Dorsolateral prefrontal cortex (tissue), 120 donors: ENCODE measurements at regions of chr17 and their contacts with region 1.

Region 1: DNA sequence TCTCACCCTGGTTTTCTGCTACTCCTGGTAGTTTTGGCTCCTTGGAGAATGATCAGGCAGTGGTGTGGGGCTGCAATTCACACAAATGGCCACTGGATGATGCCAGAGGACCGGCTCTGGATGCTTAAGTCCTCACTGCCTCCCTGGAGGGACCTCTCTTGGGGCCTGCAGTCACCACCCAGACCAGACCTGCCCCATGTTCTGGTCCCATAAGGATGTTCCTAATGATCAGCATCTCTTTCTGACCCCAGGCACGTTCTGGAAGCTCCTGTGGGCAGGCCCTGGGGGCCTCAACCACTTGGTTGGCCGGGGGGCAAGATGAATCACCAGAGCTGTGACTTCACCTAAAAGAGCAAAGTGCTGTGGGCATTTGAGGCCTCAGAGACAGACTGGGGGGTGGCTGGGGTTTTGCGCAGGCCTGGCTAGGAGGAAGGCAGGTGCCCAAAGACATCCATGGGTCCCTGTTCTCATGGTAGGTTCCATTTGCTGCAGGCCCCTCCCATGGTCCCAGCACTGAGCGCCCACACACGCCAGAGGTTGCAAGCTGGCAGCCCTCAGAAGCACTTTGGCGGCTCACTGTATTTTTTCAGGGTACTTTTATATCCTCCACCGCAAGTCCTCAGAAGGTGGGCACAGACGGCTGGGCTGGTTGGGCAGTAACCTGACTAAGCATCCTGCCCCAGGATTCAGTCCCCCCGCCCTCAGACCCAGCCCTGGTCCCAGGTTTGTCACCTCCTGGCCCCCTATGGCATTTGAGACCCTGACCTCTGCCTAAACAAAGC is 53.2 kb downstream of the NT5M start:
- DNase-seq: peak; percentile 70 to 91 (median 86)
- H3K4me3 ChIP-seq: no peak overlapping the region
- H3K27ac ChIP-seq: peak overlapping the region in 13 of 59 donors; percentile 16 to 73 (median 41)
- H3K27me3 ChIP-seq: no peaks in the 10 kb centered on the region
- CTCF ChIP-seq: peak; percentile 90 to 100 (median 98)

Region 2: GRCh38 chr17:17309356-17309755 is 47.0 kb before region 1 on chr17:
- intact Hi-C with region 1: no loop called
- DNase-seq: no peak
- H3K4me3 ChIP-seq: no peak overlapping the region
- H3K27ac ChIP-seq: no peak overlapping the region
- H3K27me3 ChIP-seq: no peaks in the 10 kb centered on the region
- CTCF ChIP-seq: no peak

Region 3: DNA sequence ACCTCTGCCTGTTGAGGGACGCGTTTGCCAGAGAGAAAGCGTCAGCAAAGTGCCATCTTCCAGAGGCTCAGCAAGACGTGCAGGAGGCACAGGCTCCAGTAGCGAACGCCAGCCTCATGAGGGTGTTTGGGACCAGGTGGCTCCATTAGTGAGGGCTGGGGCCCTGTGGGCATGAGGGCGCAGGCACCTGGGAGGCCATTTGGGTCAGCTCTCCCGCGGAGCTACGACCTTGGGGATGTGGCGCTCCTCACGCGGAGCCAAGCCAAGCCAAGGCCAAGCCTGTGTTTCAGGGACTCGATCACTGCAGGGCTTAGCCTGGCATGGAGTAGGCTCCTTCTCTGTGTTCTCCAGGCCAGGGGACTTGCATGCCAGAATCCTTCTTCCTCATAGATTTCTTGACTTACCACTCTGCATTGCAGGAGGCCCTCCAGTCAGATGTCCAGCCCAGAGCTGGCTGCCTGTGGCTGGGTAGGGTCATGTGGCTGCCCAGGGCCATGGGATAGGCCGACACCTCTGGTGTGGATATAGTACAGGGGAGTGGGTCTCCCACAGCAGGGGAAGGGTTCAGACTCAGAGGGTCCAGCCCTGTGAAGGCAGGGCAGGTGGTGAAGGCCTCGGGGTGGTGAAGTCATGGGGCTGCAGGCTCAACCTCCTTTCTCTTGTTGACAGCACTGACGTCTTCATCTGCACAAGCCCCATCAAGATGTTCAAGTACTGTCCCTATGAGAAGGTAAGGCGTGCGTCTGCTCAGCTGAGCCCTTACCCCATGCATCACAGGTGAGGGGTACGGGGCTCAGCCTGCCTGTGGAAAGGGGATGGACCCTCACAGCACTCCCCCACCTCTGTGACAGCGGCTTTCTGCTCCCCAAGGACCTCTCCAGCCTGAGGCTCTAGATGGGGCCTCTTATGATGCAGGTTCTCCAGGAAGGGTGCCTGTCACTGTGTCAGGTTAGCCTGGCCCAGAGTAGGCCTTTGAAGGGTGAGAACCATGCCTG is 33.5 kb before region 1 on chr17:
- intact Hi-C with region 1: no loop called
- DNase-seq: peak in 2 of 10 donors; percentile 15 to 23
- H3K4me3 ChIP-seq: no peak overlapping the region
- H3K27ac ChIP-seq: no peak overlapping the region
- H3K27me3 ChIP-seq: no peaks in the 10 kb centered on the region
- CTCF ChIP-seq: no peak

Region 4: DNA sequence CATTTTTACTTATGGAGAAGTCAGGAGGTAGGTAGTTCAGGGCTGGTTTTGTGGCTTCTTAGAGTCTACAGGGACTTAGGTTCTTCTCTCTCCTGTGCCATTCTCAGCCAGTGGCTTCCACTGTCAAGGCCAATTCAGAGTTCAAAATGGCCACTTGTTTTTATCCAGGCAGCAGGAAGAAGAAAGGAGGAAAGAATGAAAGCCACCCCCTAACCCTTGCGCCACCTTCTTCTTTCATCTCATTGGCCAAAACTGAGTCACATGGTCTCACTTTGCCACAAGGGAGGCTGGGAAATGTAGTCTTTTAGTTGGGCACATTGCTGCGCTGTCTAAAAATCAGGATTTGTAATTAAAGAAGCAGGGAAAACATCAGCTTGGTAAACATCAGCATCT is 59.7 kb after region 1 on chr17:
- intact Hi-C with region 1: loop called in 1 of 2 experiments (anchors 5 kb)
- DNase-seq: peak in 1 of 10 donors; percentile 52
- H3K4me3 ChIP-seq: no peak overlapping the region
- H3K27ac ChIP-seq: peak overlapping the region in 57 of 59 donors; percentile 27 to 92 (median 73)
- H3K27me3 ChIP-seq: peaks cover 0 to 13% (median 0%) of the 10 kb centered on the region in 45 donors
- CTCF ChIP-seq: no peak

Region 5: GRCh38 chr17:17568749-17569195 is 212.4 kb after region 1 on chr17:
- intact Hi-C with region 1: loop called (anchors 2 to 5 kb)
- DNase-seq: peak in 8 of 10 donors; percentile 26 to 76 (median 62)
- H3K4me3 ChIP-seq: no peak overlapping the region
- H3K27ac ChIP-seq: no peak overlapping the region
- H3K27me3 ChIP-seq: no peaks in the 10 kb centered on the region
- CTCF ChIP-seq: peak; percentile 18 to 72 (median 61)

Region 6: GRCh38 chr17:17641621-17642409 is 285.5 kb after region 1 on chr17:
- intact Hi-C with region 1: loop called (anchors 1 to 2 kb)
- DNase-seq: peak; percentile 64 to 88 (median 78)
- H3K4me3 ChIP-seq: no peak overlapping the region
- H3K27ac ChIP-seq: peak overlapping the region in 1 of 59 donors; percentile 22
- H3K27me3 ChIP-seq: no peaks in the 10 kb centered on the region
- CTCF ChIP-seq: peak; percentile 68 to 96 (median 91)

Region 7: GRCh38 chr17:17859909-17860765 is 503.8 kb after region 1 on chr17:
- intact Hi-C with region 1: loop called in 1 of 2 experiments (anchors 10 kb)
- DNase-seq: peak in 9 of 10 donors; percentile 65 to 83 (median 76)
- H3K4me3 ChIP-seq: no peak overlapping the region
- H3K27ac ChIP-seq: peak overlapping the region in 51 of 59 donors; percentile 5 to 79 (median 60)
- H3K27me3 ChIP-seq: no peaks in the 10 kb centered on the region
- CTCF ChIP-seq: peak; percentile 77 to 100 (median 97)

Region 8: DNA sequence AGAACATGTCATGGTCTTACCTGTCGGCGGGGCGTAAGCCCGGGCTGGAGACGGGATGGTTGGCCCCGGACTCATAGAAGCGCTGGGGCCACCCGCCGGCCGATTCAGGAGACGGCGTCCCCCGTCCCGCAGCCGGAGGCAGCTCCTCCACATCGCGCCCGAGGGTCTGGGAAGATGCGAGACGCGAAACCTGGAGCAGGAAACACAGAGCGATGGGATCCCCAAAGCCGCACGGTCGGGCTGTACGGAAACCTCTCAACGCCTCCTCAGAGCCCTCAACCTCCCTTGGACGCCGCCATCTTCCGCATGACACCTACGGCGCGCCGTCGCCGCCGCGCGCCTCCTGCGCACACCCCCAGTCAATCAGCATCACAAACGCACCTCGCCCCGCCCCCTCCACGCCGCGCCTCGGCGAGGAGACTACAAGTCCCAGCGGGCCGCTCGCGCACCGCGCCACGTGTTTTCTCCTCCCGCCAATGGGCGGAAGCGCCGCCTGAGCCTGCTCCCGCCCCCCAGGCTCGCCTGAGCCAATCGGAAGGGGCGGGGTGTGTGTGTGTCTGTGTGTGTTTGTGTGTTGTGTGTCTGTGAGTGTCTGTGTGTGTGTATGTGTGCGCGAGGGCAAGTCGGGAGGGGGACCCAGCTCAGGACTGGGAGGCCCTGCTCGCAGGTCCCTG is 682.7 kb after region 1 on chr17 and contains the starts of genes ATPAF2 and GID4:
- intact Hi-C with region 1: loop called in 1 of 2 experiments (anchors 10 kb)
- DNase-seq: peak; percentile 99 to 100 (median 100)
- H3K4me3 ChIP-seq: peak within 1 kb of the TSS; percentile 67 to 100 (median 94)
- H3K27ac ChIP-seq: peak within 1 kb of the TSS in 57 of 59 donors; percentile 49 to 93 (median 84)
- H3K27me3 ChIP-seq: no peaks in the 10 kb centered on the region
- CTCF ChIP-seq: peak in 33 of 56 donors; percentile 13 to 56 (median 28)
- total RNA-seq, gene ATPAF2: 23.1 to 61.4 (median 36.3) TPM
- total RNA-seq, gene GID4: 10.2 to 20.5 (median 15.2) TPM